B cell (primary cell): ENCODE measurements at regions of chrX and their contacts with region 1.

Region 1: GRCh38 chrX:135295238-135295943 is 13.9 kb upstream of the ETDC start:
- DNase-seq: peak; percentile 62
- ATAC-seq: peak; percentile 95
- H3K4me3 ChIP-seq: peak overlapping the region; percentile 51 to 72 (median 69)
- H3K4me3 Mint-ChIP-seq: peak overlapping the region; percentile 93
- H3K27ac ChIP-seq: peak overlapping the region; percentile 45 to 57
- H3K27ac Mint-ChIP-seq: peak overlapping the region; percentile 84
- H3K4me1 ChIP-seq: peaks cover 0 to 11% of the 10 kb centered on the region in 2 donors
- H3K4me1 Mint-ChIP-seq: peaks cover 13% of the 10 kb centered on the region
- H3K27me3 ChIP-seq: no peaks in the 10 kb centered on the region
- H3K27me3 Mint-ChIP-seq: no peaks in the 10 kb centered on the region
- CTCF ChIP-seq: peak; percentile 23

Region 2: GRCh38 chrX:135264211-135264610 is 31.2 kb before region 1 on chrX:
- CTCF ChIA-PET with region 1: no interaction called
- POLR2A ChIA-PET with region 1: no interaction called
- intact Hi-C with region 1: no loop called
- DNase-seq: no peak
- ATAC-seq: no peak
- H3K4me3 ChIP-seq: no peak overlapping the region
- H3K4me3 Mint-ChIP-seq: no peak overlapping the region
- H3K27ac ChIP-seq: no peak overlapping the region
- H3K27ac Mint-ChIP-seq: no peak overlapping the region
- H3K4me1 ChIP-seq: no peaks in the 10 kb centered on the region
- H3K4me1 Mint-ChIP-seq: no peaks in the 10 kb centered on the region
- H3K27me3 ChIP-seq: peaks cover 0 to 4% (median 0%) of the 10 kb centered on the region in 4 experiments
- H3K27me3 Mint-ChIP-seq: no peaks in the 10 kb centered on the region
- CTCF ChIP-seq: no peak

Region 3: GRCh38 chrX:135421537-135421931 is 126.1 kb after region 1 on chrX:
- CTCF ChIA-PET with region 1: no interaction called
- POLR2A ChIA-PET with region 1: no interaction called
- intact Hi-C with region 1: loop called (anchors 5 kb)
- DNase-seq: peak; percentile 83
- ATAC-seq: peak; percentile 93
- H3K4me3 ChIP-seq: peak overlapping the region in 4 of 5 experiments; percentile 17 to 51 (median 42)
- H3K4me3 Mint-ChIP-seq: peak overlapping the region; percentile 79
- H3K27ac ChIP-seq: no peak overlapping the region
- H3K27ac Mint-ChIP-seq: no peak overlapping the region
- H3K4me1 ChIP-seq: peaks cover 0 to 8% of the 10 kb centered on the region in 2 donors
- H3K4me1 Mint-ChIP-seq: peaks cover 3% of the 10 kb centered on the region
- H3K27me3 ChIP-seq: no peaks in the 10 kb centered on the region
- H3K27me3 Mint-ChIP-seq: no peaks in the 10 kb centered on the region
- CTCF ChIP-seq: no peak

Region 4: DNA sequence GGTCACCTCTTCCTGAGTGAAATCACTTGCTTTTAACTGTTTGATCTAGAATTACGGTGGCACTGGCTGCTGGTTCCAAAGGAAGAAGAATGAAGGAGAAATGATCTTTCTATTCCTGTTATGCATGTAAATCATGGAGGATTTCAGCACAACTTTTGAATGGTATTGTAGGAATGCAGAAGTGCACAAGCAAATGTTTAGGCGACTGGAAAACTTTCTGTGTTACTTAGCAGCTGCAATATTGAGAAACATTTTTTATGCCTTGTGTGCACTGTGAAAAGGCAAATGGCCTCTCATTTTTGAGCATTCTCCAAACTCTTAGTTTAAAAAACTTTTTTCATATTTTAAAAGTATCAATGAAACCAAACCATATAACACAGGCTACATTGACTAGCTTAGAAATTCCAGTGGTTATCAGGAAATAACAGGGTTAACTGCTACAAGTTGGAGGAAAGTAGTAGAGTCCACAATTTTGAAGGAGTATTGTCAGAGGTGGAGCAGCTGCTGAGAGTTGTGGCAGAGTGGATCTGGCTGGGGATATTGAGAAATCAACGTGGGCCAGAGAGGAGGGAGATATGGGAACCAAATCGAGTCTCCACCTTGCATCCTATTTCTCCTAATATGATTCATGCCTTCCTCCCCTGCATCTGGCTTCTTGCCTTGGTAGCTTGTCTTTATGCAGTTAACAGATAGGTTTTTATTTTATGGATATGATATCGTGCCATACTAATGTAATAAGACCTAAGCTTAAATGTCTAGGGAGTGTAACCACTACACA is 819.9 kb after region 1 on chrX:
- CTCF ChIA-PET with region 1: no interaction called
- POLR2A ChIA-PET with region 1: no interaction called
- intact Hi-C with region 1: no loop called
- DNase-seq: no peak
- ATAC-seq: no peak
- H3K4me3 ChIP-seq: no peak overlapping the region
- H3K4me3 Mint-ChIP-seq: no peak overlapping the region
- H3K27ac ChIP-seq: no peak overlapping the region
- H3K27ac Mint-ChIP-seq: no peak overlapping the region
- H3K4me1 ChIP-seq: no peaks in the 10 kb centered on the region
- H3K4me1 Mint-ChIP-seq: no peaks in the 10 kb centered on the region
- H3K27me3 ChIP-seq: no peaks in the 10 kb centered on the region
- H3K27me3 Mint-ChIP-seq: no peaks in the 10 kb centered on the region
- CTCF ChIP-seq: no peak